ENCODE measurements at regions of chr5 and their contacts with region 1.

Region 1: DNA sequence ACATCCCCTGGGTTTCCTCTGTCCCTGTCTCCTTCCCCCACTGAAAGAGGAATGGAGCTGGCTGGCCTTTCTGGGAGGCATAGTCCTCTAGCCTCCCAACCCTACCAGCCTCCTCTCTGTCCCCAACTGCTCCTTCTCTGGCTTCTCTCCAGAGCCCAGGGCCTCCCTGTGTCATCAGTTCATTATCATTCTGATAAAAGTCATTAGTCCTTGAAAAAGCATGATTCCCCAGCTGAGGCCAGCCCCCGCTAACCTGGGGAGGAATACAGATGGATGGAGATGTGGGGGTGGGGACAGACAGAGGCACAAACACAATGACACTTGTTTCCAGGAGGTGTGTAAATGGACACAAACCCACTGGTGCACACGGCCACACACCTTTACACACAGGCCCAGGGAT is 73.6 kb upstream of the HSPA9 start:
- DNase-seq: no peak
- ATAC-seq: no peak

Region 2: DNA sequence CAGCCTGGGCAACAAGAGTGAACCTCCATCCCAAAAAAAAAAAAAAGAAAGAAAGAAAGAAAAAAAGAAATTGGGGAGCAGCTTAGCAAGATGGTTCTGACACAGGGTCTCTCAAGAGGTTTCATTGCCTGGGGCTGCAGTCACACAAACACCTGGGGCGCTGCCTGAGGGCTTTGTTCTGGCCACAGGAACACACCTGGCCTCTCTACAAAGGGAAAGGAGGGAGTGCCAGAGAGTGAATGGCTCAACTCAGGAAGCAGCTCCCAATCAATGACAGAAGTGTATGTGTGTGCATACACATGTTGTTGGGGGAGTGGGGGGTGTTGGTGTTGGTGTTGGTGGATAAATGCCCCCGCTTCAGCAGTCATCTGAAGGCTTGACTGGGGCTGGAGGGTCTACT is 72.0 kb after region 1 on chr5:
- intact Hi-C with region 1: loop called (anchors 1 kb)
- DNase-seq: no peak
- ATAC-seq: no peak